ENCODE measurements at regions of chr1 and their contacts with region 1.

Region 1: DNA sequence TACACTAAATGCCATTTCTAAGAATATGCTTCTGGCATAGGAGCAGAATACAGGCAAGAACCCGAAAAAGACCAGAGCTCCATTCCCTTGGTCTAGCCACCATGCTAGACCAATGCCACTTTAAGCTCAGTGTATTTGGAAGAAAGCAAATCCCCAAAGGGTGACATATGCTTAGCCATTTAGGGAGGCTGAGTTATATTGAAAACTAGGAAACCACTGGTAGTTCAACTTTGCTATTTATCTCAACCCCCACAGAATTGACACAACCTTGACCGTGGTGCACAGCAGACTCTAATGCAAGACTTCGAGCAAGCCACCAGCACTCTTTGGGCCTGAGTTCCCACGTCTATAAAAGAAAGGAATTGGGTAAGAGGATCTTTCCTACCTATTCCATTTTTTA is 167.9 kb downstream of the ADSS2 start:
- DNase-seq: no peak
- H3K4me3 Mint-ChIP-seq: no peak overlapping the region
- H3K27ac Mint-ChIP-seq: no peak overlapping the region
- H3K4me1 Mint-ChIP-seq: no peaks in the 10 kb centered on the region
- H3K27me3 Mint-ChIP-seq: peaks cover 5% of the 10 kb centered on the region

Region 2: DNA sequence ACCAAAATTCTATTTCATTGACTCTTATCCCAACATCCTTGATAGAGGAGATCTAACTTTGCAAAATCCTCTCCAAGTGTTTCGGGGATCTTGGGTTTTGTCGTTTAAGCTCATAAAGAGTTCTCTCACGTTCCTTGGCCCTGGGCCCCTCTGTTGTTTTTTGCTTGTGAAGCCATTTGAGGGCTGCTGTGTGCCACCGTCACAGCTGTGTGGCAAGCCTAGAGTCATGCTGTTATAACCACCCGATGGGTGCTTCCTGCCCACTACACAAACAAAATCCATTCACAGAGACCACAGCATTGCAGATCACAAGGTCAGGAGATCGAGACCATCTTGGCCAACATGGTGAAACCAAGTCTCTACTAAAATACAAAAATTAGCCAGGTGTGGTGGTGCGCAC is 13.8 kb after region 1 on chr1:
- CTCF ChIA-PET with region 1: interaction called, 20 read pairs
- POLR2A ChIA-PET with region 1: no interaction called
- DNase-seq: no peak
- H3K4me3 Mint-ChIP-seq: no peak overlapping the region
- H3K27ac Mint-ChIP-seq: no peak overlapping the region
- H3K4me1 Mint-ChIP-seq: peaks cover 33% of the 10 kb centered on the region
- H3K27me3 Mint-ChIP-seq: no peaks in the 10 kb centered on the region

Measured in activated CD4-positive, alpha-beta T cell treated with anti-CD3 and anti-CD28 coated beads, Interleukin-2, amount 10 ng/mL, durations not matched to agents 7 days and 5 days (primary cell).